ENCODE measurements at regions of chr17 and their contacts with region 1.

Region 1: DNA sequence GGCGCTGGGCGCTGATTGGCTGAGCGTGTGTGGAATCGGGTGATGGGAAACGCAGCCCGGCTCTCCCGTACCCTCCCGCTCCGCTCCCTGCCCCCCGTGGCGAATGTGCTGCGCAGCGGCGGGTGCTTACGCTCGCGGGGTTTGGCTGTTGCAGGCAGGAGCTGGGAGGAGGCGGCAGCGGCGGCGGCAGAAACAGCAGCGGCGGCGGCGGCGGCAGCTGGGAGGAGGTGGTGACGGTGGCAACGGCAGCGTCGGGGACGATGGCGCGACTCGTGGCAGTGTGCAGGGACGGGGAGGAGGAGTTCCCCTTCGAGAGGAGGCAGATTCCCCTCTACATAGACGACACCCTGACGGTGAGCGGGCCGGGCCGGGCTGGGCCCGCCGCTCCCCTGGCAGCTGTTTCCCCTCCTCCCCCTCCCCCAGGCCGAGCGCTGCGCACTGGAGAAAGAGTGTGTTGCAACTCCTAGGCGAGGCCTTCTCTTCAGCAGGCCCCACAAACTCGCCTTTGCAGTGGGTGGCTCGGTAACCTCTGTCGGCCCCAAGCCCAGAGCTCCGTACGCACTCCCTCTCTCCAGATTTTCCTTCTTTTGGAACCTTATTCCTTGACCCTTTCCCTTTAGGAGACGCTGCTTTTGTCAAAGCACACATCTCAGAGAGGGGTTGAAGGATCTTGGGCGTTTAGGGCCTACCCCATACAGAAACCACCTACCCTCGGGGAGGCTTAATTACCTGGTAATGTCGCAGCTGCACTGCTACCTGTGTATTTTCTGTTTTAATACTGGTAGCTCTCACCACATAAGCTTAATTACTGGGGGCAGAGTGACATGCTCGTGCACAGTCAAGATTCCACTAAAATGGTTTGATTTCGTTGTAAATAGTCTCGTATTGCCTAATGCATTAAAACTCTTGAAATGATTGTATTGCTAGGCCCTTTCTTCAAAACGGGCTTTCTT is 1.0 kb downstream of the GGNBP2 start:
- DNase-seq: peak; percentile 94
- ATAC-seq: peak; percentile 67
- H3K4me3 Mint-ChIP-seq: peak overlapping the region; percentile 92
- H3K27ac Mint-ChIP-seq: peak overlapping the region; percentile 92
- H3K4me1 Mint-ChIP-seq: peaks cover 59% of the 10 kb centered on the region
- H3K27me3 Mint-ChIP-seq: no peaks in the 10 kb centered on the region
- CTCF ChIP-seq: no peak

Region 2: GRCh38 chr17:35578197-35578928 is 967.4 kb before region 1 on chr17 and contains the start of gene PEX12:
- CTCF ChIA-PET with region 1: no interaction called
- POLR2A ChIA-PET with region 1: interaction called, 17 read pairs
- intact Hi-C with region 1: loop called (anchors 10 kb)
- DNase-seq: peak; percentile 71
- ATAC-seq: peak; percentile 95
- H3K4me3 Mint-ChIP-seq: peak within 1 kb of the TSS; percentile 96
- H3K27ac Mint-ChIP-seq: peak within 1 kb of the TSS; percentile 98
- H3K4me1 Mint-ChIP-seq: peaks cover 26% of the 10 kb centered on the region
- H3K27me3 Mint-ChIP-seq: no peaks in the 10 kb centered on the region
- CTCF ChIP-seq: no peak
- total RNA-seq, gene PEX12: 4.1 and 4.8 TPM in 2 replicates

Region 3: GRCh38 chr17:35587074-35587971 is 958.4 kb before region 1 on chr17 and contains the start of gene AP2B1:
- CTCF ChIA-PET with region 1: no interaction called
- POLR2A ChIA-PET with region 1: no interaction called
- intact Hi-C with region 1: loop called (anchors 10 kb)
- DNase-seq: peak; percentile 97
- ATAC-seq: peak; percentile 97
- H3K4me3 Mint-ChIP-seq: peak within 1 kb of the TSS; percentile 100
- H3K27ac Mint-ChIP-seq: peak within 1 kb of the TSS; percentile 100
- H3K4me1 Mint-ChIP-seq: peaks cover 32% of the 10 kb centered on the region
- H3K27me3 Mint-ChIP-seq: peaks cover 5% of the 10 kb centered on the region
- CTCF ChIP-seq: no peak
- total RNA-seq, gene AP2B1: 129 and 152 TPM in 2 replicates

Region 4: GRCh38 chr17:36534840-36535668 is 10.7 kb before region 1 on chr17 and contains the starts of genes MYO19 and PIGW:
- CTCF ChIA-PET with region 1: interaction called, 12 read pairs
- POLR2A ChIA-PET with region 1: interaction called, 153 read pairs
- intact Hi-C with region 1: loop called (anchors 1 kb)
- DNase-seq: peak; percentile 88
- ATAC-seq: peak; percentile 82
- H3K4me3 Mint-ChIP-seq: peak within 1 kb of the TSS; percentile 98
- H3K27ac Mint-ChIP-seq: peak within 1 kb of the TSS; percentile 100
- H3K4me1 Mint-ChIP-seq: peaks cover 20% of the 10 kb centered on the region
- H3K27me3 Mint-ChIP-seq: no peaks in the 10 kb centered on the region
- CTCF ChIP-seq: no peak
- total RNA-seq, gene MYO19: 70.8 and 85.6 TPM in 2 replicates
- total RNA-seq, gene PIGW: 18.2 and 20.7 TPM in 2 replicates

Region 5: DNA sequence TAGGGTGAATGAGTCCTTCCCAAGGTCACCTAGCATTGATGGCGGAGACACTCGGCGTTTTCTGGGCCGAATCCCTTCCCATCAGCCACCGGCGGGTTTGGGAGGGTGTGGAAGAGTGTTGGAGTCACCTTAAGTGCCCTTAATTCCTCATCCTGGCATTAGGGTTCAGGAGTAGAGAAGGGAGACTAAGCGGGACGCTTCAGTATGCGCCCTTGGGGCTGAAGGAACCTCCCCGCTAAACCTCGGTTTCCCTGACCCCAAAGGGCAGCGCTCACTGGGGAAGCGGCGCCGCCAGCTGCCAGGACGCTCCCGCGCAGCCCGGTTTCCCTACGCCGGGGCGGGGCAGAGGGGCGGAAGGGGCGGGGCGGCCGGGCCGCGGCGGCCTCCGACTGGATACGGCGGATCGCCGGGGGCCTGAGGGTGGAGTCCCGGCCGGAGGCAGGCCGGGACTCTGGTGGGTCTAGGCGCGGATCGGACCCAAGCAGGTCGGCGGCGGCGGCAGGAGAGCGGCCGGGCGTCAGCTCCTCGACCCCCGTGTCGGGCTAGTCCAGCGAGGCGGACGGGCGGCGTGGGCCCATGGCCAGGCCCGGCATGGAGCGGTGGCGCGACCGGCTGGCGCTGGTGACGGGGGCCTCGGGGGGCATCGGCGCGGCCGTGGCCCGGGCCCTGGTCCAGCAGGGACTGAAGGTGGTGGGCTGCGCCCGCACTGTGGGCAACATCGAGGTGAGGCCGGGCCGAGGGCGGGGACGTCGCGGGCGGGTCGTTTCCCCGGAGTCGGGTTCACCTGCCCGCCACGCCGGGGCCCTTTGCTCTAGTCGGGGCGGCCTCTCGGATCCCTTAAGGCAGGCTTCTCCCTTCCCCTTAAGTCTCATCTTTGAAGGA is 45.9 kb after region 1 on chr17 and contains the start of gene DHRS11:
- CTCF ChIA-PET with region 1: no interaction called
- POLR2A ChIA-PET with region 1: interaction called, 7 read pairs
- intact Hi-C with region 1: loop called (anchors 2 kb)
- DNase-seq: peak; percentile 76
- ATAC-seq: peak; percentile 96
- H3K4me3 Mint-ChIP-seq: peak within 1 kb of the TSS; percentile 78
- H3K27ac Mint-ChIP-seq: peak within 1 kb of the TSS; percentile 46
- H3K4me1 Mint-ChIP-seq: peaks cover 13% of the 10 kb centered on the region
- H3K27me3 Mint-ChIP-seq: no peaks in the 10 kb centered on the region
- CTCF ChIP-seq: no peak
- total RNA-seq, gene DHRS11: 5.7 and 7.7 TPM in 2 replicates

Region 6: DNA sequence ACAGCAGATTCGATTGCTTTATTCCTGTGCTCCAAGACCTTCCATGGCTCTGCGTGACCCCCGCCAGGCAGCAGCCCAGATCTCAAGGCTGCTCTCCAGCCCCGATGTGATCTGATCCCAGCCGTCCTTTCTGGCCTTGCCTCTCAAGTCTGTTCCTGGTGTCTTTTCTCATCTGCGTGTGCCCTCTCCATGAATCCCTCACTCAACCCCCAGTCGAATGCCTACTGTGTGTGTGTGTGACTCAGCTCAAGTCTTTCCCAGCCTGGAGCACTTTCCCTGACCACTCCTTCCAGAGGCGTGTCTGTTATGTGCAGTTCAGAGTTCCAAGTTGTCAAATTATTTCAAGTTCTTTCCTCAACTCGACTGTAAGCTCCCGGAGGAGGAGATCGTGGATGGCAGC is 119.7 kb after region 1 on chr17:
- CTCF ChIA-PET with region 1: no interaction called
- POLR2A ChIA-PET with region 1: no interaction called
- intact Hi-C with region 1: no loop called
- DNase-seq: no peak
- ATAC-seq: no peak
- H3K4me3 Mint-ChIP-seq: no peak overlapping the region
- H3K27ac Mint-ChIP-seq: no peak overlapping the region
- H3K4me1 Mint-ChIP-seq: no peaks in the 10 kb centered on the region
- H3K27me3 Mint-ChIP-seq: peaks cover 22% of the 10 kb centered on the region
- CTCF ChIP-seq: no peak

Region 7: GRCh38 chr17:36722121-36722902 is 176.6 kb after region 1 on chr17:
- CTCF ChIA-PET with region 1: no interaction called
- POLR2A ChIA-PET with region 1: interaction called, 3 read pairs
- intact Hi-C with region 1: loop called (anchors 1 kb)
- DNase-seq: peak; percentile 82
- ATAC-seq: peak; percentile 94
- H3K4me3 Mint-ChIP-seq: peak overlapping the region; percentile 85
- H3K27ac Mint-ChIP-seq: peak overlapping the region; percentile 90
- H3K4me1 Mint-ChIP-seq: peaks cover 54% of the 10 kb centered on the region
- H3K27me3 Mint-ChIP-seq: peaks cover 2% of the 10 kb centered on the region
- CTCF ChIP-seq: no peak

Region 8: DNA sequence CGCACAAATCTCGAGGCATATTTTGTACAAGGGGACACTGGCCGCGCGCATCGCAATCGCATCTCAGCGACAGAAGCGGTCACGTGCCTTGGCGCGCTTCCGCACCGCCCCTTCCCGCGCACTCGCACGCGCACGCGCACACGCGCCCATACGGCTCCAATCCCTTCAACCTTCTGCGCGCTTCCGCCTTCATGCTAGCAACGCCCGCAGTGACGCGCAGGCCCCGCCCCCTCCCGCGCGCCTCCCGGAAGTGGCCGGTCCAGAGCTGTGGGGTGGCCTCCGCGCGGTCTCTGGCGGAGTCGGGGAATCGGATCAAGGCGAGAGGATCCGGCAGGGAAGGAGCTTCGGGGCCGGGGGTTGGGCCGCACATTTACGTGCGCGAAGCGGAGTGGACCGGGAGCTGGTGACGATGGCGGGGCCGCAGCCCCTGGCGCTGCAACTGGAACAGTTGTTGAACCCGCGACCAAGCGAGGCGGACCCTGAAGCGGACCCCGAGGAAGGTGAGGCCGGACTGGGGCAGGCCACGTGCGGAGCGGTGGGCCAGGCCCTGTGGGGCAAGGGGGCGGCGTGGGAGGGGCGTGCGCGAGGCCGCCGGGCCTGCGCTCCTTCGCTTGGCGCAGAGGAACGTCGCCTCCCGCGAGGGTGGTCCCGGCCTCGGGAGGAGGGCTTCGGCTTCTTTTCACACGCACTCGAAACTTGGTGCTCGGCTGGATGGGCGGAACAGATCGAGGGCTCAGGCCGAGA is 403.1 kb after region 1 on chr17 and contains the start of gene AATF:
- CTCF ChIA-PET with region 1: no interaction called
- POLR2A ChIA-PET with region 1: no interaction called
- intact Hi-C with region 1: loop called (anchors 2 kb)
- DNase-seq: peak; percentile 97
- ATAC-seq: peak; percentile 95
- H3K4me3 Mint-ChIP-seq: peak within 1 kb of the TSS; percentile 92
- H3K27ac Mint-ChIP-seq: peak within 1 kb of the TSS; percentile 93
- H3K4me1 Mint-ChIP-seq: peaks cover 49% of the 10 kb centered on the region
- H3K27me3 Mint-ChIP-seq: peaks cover 18% of the 10 kb centered on the region
- CTCF ChIP-seq: no peak
- total RNA-seq, gene AATF: 73.2 and 86.1 TPM in 2 replicates

Measured in activated B cell treated with CpG ODN at 0.5 μM for 24 hours (primary cell).